AG04450 (cell line): ENCODE measurements at regions of chr20 and their contacts with region 1.

Region 1: GRCh38 chr20:45436732-45437391 is 20.9 kb downstream of the PIGT start:
- DNase-seq: peak; percentile 62
- H3K4me3 ChIP-seq: peak overlapping the region; percentile 60
- H3K27ac ChIP-seq: no peak overlapping the region
- H3K27me3 ChIP-seq: peaks cover 7% of the 10 kb centered on the region
- CTCF ChIP-seq: peak; percentile 98

Region 2: DNA sequence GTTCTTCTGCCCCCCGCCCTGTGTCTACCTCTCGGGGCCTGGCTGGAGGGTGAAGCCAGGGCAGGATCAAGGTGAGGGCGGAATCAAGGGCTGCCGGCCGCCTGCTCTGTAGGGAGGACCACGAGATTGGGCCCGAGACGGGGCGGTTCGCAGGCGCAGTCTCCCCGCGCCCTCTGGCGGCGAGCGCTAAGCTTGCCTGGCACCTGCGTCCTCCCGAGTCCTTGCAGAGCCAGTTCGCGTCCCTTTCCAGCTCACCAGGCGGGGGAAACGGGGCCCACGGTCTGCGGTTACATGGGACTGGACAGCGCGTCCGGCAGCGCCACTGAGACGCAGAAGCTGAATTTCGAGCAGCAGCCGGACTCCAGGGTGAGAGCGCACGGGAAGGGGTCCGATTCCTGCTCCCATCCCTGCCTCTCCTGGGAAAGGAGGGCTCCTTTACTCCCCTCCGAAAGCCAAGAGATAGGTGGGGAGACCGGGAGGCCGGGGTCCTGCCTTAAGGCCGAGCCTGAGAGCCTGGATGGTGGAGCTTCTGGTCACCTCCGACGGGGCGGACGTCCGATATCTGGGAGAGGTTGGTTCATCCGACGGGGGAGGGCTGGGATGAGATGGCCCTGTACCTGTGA is 125.2 kb before region 1 on chr20:
- CTCF ChIA-PET with region 1: interaction called, 185 read pairs
- POLR2A ChIA-PET with region 1: interaction called, 3 read pairs
- DNase-seq: no peak
- H3K4me3 ChIP-seq: no peak overlapping the region
- H3K27ac ChIP-seq: no peak overlapping the region
- H3K27me3 ChIP-seq: peaks cover 42% of the 10 kb centered on the region
- CTCF ChIP-seq: peak; percentile 77

Region 3: DNA sequence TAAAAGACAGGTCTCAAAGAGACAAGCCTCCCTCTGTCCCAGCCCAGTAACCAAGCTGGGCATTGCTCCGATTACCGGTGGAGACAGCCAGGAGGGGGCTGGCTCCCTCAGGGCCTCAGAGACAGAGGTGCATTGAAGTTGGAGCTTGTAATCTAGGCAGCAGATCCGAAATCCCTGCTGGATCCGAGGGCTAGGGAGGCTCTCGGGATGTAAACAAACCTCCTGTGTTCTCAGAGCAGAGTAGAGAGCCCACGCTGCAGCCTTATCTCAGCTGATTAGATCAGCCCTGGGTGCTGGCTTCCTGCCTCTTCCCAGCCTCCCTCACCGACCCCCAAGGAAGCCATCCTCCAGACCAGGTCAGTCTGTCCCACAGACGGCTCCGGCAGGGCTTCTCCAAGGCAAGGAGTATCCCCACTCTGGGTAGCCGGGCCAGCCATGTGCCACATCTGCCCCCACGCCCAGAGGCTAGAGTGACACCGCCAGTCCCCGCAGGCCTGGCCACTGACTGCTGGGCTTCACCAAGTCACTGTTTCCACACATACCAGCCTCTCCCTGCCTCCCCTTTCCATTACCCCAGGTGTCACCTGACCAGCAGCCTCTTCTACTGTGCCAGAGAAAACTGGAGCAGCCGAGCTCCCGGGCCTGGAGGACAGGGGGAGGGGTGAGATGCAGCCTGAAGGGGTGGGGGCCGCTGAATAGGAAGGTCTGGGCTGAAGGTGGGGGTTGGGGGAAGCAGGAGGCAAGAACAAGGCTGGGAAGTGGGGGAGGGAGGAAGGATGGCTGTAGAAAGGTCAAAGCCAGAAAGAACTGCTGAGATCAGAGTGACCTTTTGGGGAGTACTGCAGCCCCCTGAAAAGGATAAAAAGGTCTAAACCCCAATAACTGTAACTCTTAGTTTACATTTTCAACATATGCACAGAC is 94.7 kb before region 1 on chr20:
- CTCF ChIA-PET with region 1: interaction called, 35 read pairs
- POLR2A ChIA-PET with region 1: interaction called, 4 read pairs
- DNase-seq: no peak
- H3K4me3 ChIP-seq: peak overlapping the region; percentile 97
- H3K27ac ChIP-seq: peak overlapping the region; percentile 85
- H3K27me3 ChIP-seq: no peaks in the 10 kb centered on the region
- CTCF ChIP-seq: no peak

Region 4: GRCh38 chr20:45362804-45363610 is 73.9 kb before region 1 on chr20 and contains the start of gene SYS1:
- CTCF ChIA-PET with region 1: interaction called, 88 read pairs
- POLR2A ChIA-PET with region 1: interaction called, 21 read pairs
- DNase-seq: peak; percentile 97
- H3K4me3 ChIP-seq: peak within 1 kb of the TSS; percentile 96
- H3K27ac ChIP-seq: peak within 1 kb of the TSS; percentile 97
- H3K27me3 ChIP-seq: no peaks in the 10 kb centered on the region
- CTCF ChIP-seq: peak; percentile 94
- polyA plus RNA-seq, gene SYS1: 25.1 and 33.4 TPM in 2 replicates

Region 5: GRCh38 chr20:45406259-45407066 is 30.4 kb before region 1 on chr20:
- CTCF ChIA-PET with region 1: interaction called, 14 read pairs
- POLR2A ChIA-PET with region 1: interaction called, 3 read pairs
- DNase-seq: no peak
- H3K4me3 ChIP-seq: peak overlapping the region; percentile 70
- H3K27ac ChIP-seq: no peak overlapping the region
- H3K27me3 ChIP-seq: no peaks in the 10 kb centered on the region
- CTCF ChIP-seq: no peak

Region 6: GRCh38 chr20:45450097-45450818 is 13.4 kb after region 1 on chr20:
- CTCF ChIA-PET with region 1: interaction called, 37 read pairs
- POLR2A ChIA-PET with region 1: no interaction called
- DNase-seq: no peak
- H3K4me3 ChIP-seq: no peak overlapping the region
- H3K27ac ChIP-seq: no peak overlapping the region
- H3K27me3 ChIP-seq: peaks cover 18% of the 10 kb centered on the region
- CTCF ChIP-seq: peak; percentile 62